ENCODE measurements at regions of chr1 and their contacts with region 1.

Region 1: GRCh38 chr1:110460253-110461220 is 9.6 kb downstream of the PROK1 start:
- DNase-seq: peak; percentile 77
- H3K4me3 Mint-ChIP-seq: no peak overlapping the region
- H3K27ac Mint-ChIP-seq: no peak overlapping the region
- H3K4me1 Mint-ChIP-seq: peaks cover 24% of the 10 kb centered on the region
- H3K27me3 Mint-ChIP-seq: peaks cover 23% of the 10 kb centered on the region
- CTCF ChIP-seq: peak; percentile 70

Region 2: GRCh38 chr1:110034451-110035235 is 425.9 kb before region 1 on chr1 and contains the start of gene STRIP1:
- CTCF ChIA-PET with region 1: interaction called, 5 read pairs
- intact Hi-C with region 1: loop called (anchors 2 kb)
- DNase-seq: peak; percentile 83
- H3K4me3 Mint-ChIP-seq: peak within 1 kb of the TSS; percentile 94
- H3K27ac Mint-ChIP-seq: peak within 1 kb of the TSS; percentile 81
- H3K4me1 Mint-ChIP-seq: peaks cover 28% of the 10 kb centered on the region
- H3K27me3 Mint-ChIP-seq: no peaks in the 10 kb centered on the region
- CTCF ChIP-seq: no peak
- total RNA-seq, gene STRIP1: 27.5 and 28.4 TPM in 2 replicates

Region 3: GRCh38 chr1:110209715-110210603 is 250.6 kb before region 1 on chr1 and contains the start of gene KCNC4:
- CTCF ChIA-PET with region 1: interaction called, 27 read pairs
- intact Hi-C with region 1: no loop called
- DNase-seq: peak; percentile 85
- H3K4me3 Mint-ChIP-seq: peak within 1 kb of the TSS; percentile 92
- H3K27ac Mint-ChIP-seq: peak within 1 kb of the TSS; percentile 72
- H3K4me1 Mint-ChIP-seq: peaks cover 30% of the 10 kb centered on the region
- H3K27me3 Mint-ChIP-seq: no peaks in the 10 kb centered on the region
- CTCF ChIP-seq: no peak
- total RNA-seq, gene KCNC4: 16.0 and 24.3 TPM in 2 replicates

Region 4: GRCh38 chr1:110412576-110412975 is 48.0 kb before region 1 on chr1:
- CTCF ChIA-PET with region 1: interaction called, 37 read pairs
- intact Hi-C with region 1: loop called (anchors 1 kb)
- DNase-seq: peak; percentile 72
- H3K4me3 Mint-ChIP-seq: no peak overlapping the region
- H3K27ac Mint-ChIP-seq: no peak overlapping the region
- H3K4me1 Mint-ChIP-seq: peaks cover 11% of the 10 kb centered on the region
- H3K27me3 Mint-ChIP-seq: peaks cover 28% of the 10 kb centered on the region
- CTCF ChIP-seq: peak; percentile 72

Region 5: GRCh38 chr1:110495926-110496600 is 35.5 kb after region 1 on chr1:
- CTCF ChIA-PET with region 1: interaction called, 20 read pairs
- intact Hi-C with region 1: loop called (anchors 2 kb)
- DNase-seq: peak; percentile 79
- H3K4me3 Mint-ChIP-seq: no peak overlapping the region
- H3K27ac Mint-ChIP-seq: no peak overlapping the region
- H3K4me1 Mint-ChIP-seq: no peaks in the 10 kb centered on the region
- H3K27me3 Mint-ChIP-seq: peaks cover 36% of the 10 kb centered on the region
- CTCF ChIP-seq: peak; percentile 79